ENCODE measurements at regions of chr2 and their contacts with region 1.

Region 1: DNA sequence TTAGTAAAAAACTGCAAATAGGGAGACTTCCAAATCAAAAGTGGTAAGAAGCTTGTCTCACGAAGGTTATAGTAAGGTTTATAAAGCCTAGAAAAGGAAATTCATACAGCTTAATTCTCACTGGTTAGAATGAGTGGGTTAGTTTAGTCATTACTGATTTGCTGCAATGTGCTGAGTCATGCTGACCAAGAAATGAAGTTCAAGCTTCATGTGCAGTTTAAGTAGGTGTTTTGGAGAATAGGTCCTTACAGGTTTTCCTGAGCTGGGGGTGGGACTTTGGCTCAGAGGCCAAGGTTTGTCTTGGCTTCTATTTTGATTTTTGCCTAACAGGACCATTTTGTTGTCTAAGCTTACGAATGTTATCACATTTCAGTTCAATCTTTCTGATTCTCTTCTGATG is 15.1 kb downstream of the CLIP4 start:
- DNase-seq: peak; percentile 67
- H3K4me3 Mint-ChIP-seq: no peak overlapping the region
- H3K27ac Mint-ChIP-seq: peak overlapping the region; percentile 70
- H3K4me1 Mint-ChIP-seq: peaks cover 48% of the 10 kb centered on the region
- H3K27me3 Mint-ChIP-seq: no peaks in the 10 kb centered on the region

Region 2: DNA sequence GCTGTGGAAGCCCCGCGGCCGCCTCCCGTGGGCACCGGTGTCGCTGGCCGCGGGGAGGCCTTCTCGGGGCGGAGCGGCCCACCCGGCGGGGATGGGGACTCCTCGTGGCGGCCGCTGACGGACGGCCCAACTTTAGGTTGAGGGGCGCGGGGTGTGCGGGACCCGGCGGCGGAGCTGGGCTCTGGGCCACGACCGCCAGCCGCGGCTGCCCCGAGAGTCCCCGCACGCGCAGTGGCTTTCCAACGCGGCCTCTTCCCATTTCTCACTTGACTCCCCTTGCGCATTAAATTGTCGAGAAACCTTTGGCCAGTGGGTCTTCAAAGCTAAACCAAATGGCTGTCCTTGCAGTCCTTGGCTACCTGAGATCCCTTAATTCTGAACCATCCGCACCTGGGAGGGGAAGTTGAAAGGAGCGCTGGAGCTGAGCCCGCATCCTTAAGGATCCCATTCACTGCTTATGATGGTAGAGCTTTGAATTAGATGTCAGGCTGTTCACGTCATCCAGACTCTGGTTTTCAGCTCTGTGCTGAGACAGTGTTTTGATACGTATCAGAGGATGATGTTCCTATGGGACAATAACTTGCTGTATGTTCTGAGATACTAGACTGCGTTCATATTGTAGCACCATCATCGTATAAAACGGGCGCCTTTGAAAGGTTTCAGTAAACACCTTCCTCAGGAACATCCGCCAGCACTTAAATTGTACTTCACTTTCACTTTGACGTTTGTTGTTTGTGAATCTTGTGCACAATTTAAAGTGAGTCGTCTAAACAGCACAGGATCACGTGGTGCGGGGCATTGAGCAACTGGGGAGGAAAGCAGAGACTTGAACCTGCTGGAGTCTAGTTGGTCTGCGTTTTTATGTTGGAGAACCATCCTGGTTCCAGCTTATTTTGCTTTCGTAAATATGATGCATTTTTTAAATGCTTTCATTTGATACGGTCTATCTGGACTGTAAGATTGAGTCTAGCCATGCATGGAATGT is 14.2 kb before region 1 on chr2:
- CTCF ChIA-PET with region 1: interaction called, 14 read pairs
- POLR2A ChIA-PET with region 1: interaction called, 49 read pairs
- intact Hi-C with region 1: loop called (anchors 1 kb)
- DNase-seq: peak; percentile 85
- H3K4me3 Mint-ChIP-seq: peak overlapping the region; percentile 88
- H3K27ac Mint-ChIP-seq: peak overlapping the region; percentile 93
- H3K4me1 Mint-ChIP-seq: peaks cover 58% of the 10 kb centered on the region
- H3K27me3 Mint-ChIP-seq: no peaks in the 10 kb centered on the region